PC-9 (cell line): ENCODE measurements at regions of chr10 and their contacts with region 1.

Region 1: GRCh38 chr10:119517235-119518141 is 25.0 kb downstream of the RGS10 start:
- DNase-seq: no peak
- H3K4me3 ChIP-seq: no peak overlapping the region
- H3K27ac ChIP-seq: peak overlapping the region; percentile 77
- H3K4me1 ChIP-seq: peaks cover 29% of the 10 kb centered on the region
- H3K27me3 ChIP-seq: no peaks in the 10 kb centered on the region
- CTCF ChIP-seq: no peak

Region 2: GRCh38 chr10:119461380-119461779 is 56.1 kb before region 1 on chr10:
- CTCF ChIA-PET with region 1: no interaction called
- POLR2A ChIA-PET with region 1: interaction called, 4 read pairs
- intact Hi-C with region 1: loop called (anchors 5 kb)
- DNase-seq: peak; percentile 77 to 92
- H3K4me3 ChIP-seq: peak overlapping the region; percentile 13; the same call in 1 of the 2 replicates
- H3K27ac ChIP-seq: peak overlapping the region; percentile 90
- H3K4me1 ChIP-seq: peaks cover 41% of the 10 kb centered on the region
- H3K27me3 ChIP-seq: no peaks in the 10 kb centered on the region
- CTCF ChIP-seq: no peak

Region 3: DNA sequence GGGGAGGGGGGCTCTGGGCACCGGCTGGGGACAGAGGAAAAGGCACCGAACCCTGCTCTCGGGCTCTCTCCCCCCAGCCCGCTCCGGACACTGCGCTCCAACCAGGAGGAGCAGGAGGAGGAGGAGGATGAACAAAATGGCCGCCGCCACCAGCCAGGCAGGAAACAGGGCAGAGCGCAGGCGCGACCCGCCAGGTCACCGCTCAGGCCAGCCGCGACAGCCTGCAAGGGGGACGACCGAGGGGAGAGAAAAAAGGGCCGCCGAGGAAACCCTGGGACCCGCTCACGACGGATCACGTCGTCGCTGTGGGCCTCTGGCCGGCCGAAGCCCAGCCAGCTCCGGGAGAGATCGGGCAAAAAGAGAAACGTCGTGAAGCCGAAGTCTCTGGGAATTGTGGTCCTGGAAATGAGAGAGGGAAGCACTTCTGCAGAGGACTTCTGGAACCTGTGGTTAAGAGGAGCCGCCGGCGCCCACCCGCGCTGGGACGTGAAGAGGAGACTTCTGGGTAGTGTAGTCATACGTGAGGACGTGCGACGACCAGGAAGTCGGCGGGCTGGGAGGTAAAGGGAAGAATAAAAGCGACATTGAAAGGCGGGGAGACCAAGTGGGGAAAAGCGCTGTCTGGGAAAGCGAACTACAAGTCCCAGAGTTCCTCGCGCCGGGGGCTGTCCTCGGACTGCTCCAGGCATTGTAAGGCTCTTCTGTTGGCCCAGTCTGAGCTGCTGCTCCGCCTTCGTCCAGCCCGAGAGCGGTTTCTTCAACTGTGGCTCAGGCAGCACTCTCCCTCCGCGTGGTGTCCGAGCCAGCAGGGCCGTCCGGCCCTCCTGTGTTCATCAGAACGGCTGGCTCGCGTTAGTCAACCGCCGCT is 79.3 kb after region 1 on chr10 and contains the start of gene TIAL1:
- CTCF ChIA-PET with region 1: no interaction called
- POLR2A ChIA-PET with region 1: no interaction called
- intact Hi-C with region 1: loop called (anchors 2 kb)
- DNase-seq: peak; percentile 92 to 96
- H3K4me3 ChIP-seq: peak within 1 kb of the TSS; percentile 79
- H3K27ac ChIP-seq: peak within 1 kb of the TSS; percentile 92
- H3K4me1 ChIP-seq: peaks cover 35% of the 10 kb centered on the region
- H3K27me3 ChIP-seq: no peaks in the 10 kb centered on the region
- CTCF ChIP-seq: no peak
- total RNA-seq, gene TIAL1: 81.4 and 94.1 TPM in 2 replicates

Region 4: DNA sequence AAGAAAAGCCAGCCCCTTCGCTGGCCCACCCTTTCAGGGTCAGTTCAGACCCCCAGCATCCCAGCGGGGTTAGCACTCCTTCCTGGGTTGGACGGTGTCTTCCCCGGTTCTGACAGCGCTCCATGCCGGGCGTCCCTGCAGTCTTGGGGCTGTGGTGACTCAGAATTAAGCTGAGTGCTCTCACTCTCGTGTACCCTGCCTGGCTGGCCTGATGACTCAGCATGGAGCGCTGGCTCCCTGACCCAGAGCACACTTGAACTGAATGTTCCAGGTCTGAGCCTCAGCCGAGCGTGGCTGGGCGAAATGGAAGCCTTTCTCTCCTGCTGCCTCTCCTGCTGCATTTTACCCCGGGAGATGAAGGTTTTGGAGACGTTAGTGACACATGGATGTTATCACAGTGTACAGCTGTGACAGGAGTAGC is 140.8 kb after region 1 on chr10:
- CTCF ChIA-PET with region 1: no interaction called
- POLR2A ChIA-PET with region 1: no interaction called
- intact Hi-C with region 1: loop called (anchors 5 kb)
- DNase-seq: peak; percentile 67 to 79
- H3K4me3 ChIP-seq: peak overlapping the region; percentile 36; the same call in 1 of the 2 replicates
- H3K27ac ChIP-seq: peak overlapping the region; percentile 76
- H3K4me1 ChIP-seq: peaks cover 96% of the 10 kb centered on the region
- H3K27me3 ChIP-seq: no peaks in the 10 kb centered on the region
- CTCF ChIP-seq: no peak

Region 5: GRCh38 chr10:120011359-120012130 is 494.1 kb after region 1 on chr10:
- CTCF ChIA-PET with region 1: no interaction called
- POLR2A ChIA-PET with region 1: no interaction called
- intact Hi-C with region 1: no loop called
- DNase-seq: no peak
- H3K4me3 ChIP-seq: no peak overlapping the region
- H3K27ac ChIP-seq: no peak overlapping the region
- H3K4me1 ChIP-seq: no peaks in the 10 kb centered on the region
- H3K27me3 ChIP-seq: no peaks in the 10 kb centered on the region
- CTCF ChIP-seq: no peak